ENCODE measurements at regions of chr2 and their contacts with region 1.

Region 1: GRCh38 chr2:227052879-227053278 is 111.1 kb downstream of the COL4A4 start:
- DNase-seq: no peak
- ATAC-seq: no peak
- H3K4me3 ChIP-seq: no peak overlapping the region
- H3K27ac ChIP-seq: no peak overlapping the region
- H3K4me1 ChIP-seq: no peaks in the 10 kb centered on the region
- H3K27me3 ChIP-seq: no peaks in the 10 kb centered on the region
- CTCF ChIP-seq: no peak
- POLR2A ChIP-seq: no peak
- RAD21 ChIP-seq: no peak

Region 2: GRCh38 chr2:226295123-226295522 is 757.8 kb before region 1 on chr2:
- CTCF ChIA-PET with region 1: no interaction called
- POLR2A ChIA-PET with region 1: no interaction called
- RAD21 ChIA-PET with region 1: no interaction called
- intact Hi-C with region 1: no loop called
- DNase-seq: no peak
- ATAC-seq: no peak
- H3K4me3 ChIP-seq: no peak overlapping the region
- H3K27ac ChIP-seq: no peak overlapping the region
- H3K4me1 ChIP-seq: no peaks in the 10 kb centered on the region
- H3K27me3 ChIP-seq: no peaks in the 10 kb centered on the region
- CTCF ChIP-seq: no peak
- POLR2A ChIP-seq: no peak
- RAD21 ChIP-seq: no peak

Region 3: GRCh38 chr2:226508683-226509082 is 544.2 kb before region 1 on chr2:
- CTCF ChIA-PET with region 1: no interaction called
- POLR2A ChIA-PET with region 1: no interaction called
- RAD21 ChIA-PET with region 1: no interaction called
- intact Hi-C with region 1: no loop called
- DNase-seq: no peak
- ATAC-seq: no peak
- H3K4me3 ChIP-seq: no peak overlapping the region
- H3K27ac ChIP-seq: no peak overlapping the region
- H3K4me1 ChIP-seq: no peaks in the 10 kb centered on the region
- H3K27me3 ChIP-seq: no peaks in the 10 kb centered on the region
- CTCF ChIP-seq: no peak
- POLR2A ChIP-seq: no peak
- RAD21 ChIP-seq: no peak

Region 4: GRCh38 chr2:226763320-226763719 is 289.6 kb before region 1 on chr2:
- CTCF ChIA-PET with region 1: no interaction called
- POLR2A ChIA-PET with region 1: no interaction called
- RAD21 ChIA-PET with region 1: no interaction called
- intact Hi-C with region 1: no loop called
- DNase-seq: no peak
- ATAC-seq: no peak
- H3K4me3 ChIP-seq: no peak overlapping the region
- H3K27ac ChIP-seq: peak overlapping the region; percentile 96
- H3K4me1 ChIP-seq: peaks cover 65 to 93% of the 10 kb centered on the region in 2 experiments
- H3K27me3 ChIP-seq: no peaks in the 10 kb centered on the region
- CTCF ChIP-seq: no peak
- POLR2A ChIP-seq: no peak
- RAD21 ChIP-seq: no peak

Region 5: DNA sequence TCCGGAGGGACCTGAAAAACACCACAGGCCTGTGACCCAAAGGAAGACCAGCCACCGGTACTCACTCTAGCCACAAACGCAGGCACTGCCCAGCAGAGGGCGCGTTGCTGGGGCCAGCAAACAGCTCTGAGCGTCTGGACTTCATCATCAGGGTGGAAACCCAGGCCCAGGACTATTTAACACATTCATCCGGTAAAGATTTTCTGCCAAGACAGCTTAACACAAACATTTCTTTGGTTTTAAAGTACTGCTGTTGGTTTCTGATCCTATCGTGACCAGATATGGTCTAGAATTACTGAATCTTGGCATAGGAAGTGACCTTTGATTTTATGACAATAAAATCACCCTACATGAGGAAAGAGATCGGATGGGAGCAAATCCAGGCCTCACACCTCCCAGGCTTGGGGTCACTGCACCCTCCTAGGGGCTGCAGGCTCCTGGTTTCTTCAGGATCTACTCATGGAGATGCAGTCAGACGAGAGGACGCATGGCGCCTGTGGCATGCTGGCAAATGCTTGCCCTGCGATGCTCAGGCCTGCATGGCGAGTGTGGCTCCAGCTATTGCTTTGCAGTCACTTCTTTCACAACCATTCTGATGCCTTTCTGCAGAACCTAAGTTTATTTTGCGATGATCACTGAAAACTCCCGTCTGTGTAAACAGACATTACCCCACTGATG is 19.3 kb before region 1 on chr2:
- CTCF ChIA-PET with region 1: interaction called, 10 read pairs
- POLR2A ChIA-PET with region 1: no interaction called
- RAD21 ChIA-PET with region 1: no interaction called
- intact Hi-C with region 1: no loop called
- DNase-seq: peak; percentile 4
- ATAC-seq: peak; percentile 100
- H3K4me3 ChIP-seq: no peak overlapping the region
- H3K27ac ChIP-seq: no peak overlapping the region
- H3K4me1 ChIP-seq: no peaks in the 10 kb centered on the region
- H3K27me3 ChIP-seq: no peaks in the 10 kb centered on the region
- CTCF ChIP-seq: peak; percentile 42 to 91 (median 89); a peak in 5 of 6 replicates
- POLR2A ChIP-seq: no peak
- RAD21 ChIP-seq: peak; percentile 49

Measured in HCT116 (cell line).